ENCODE measurements at regions of chr7 and their contacts with region 1.

Region 1: GRCh38 chr7:64307254-64308015 is 6.3 kb upstream of the ZNF736 start:
- DNase-seq: peak; percentile 95
- H3K4me3 Mint-ChIP-seq: peak overlapping the region; percentile 89
- H3K27ac Mint-ChIP-seq: peak overlapping the region; percentile 95
- H3K4me1 Mint-ChIP-seq: peaks cover 26% of the 10 kb centered on the region
- H3K27me3 Mint-ChIP-seq: no peaks in the 10 kb centered on the region

Region 2: GRCh38 chr7:63900394-63901203 is 406.8 kb before region 1 on chr7:
- CTCF ChIA-PET with region 1: no interaction called
- intact Hi-C with region 1: loop called (anchors 1 kb)
- DNase-seq: peak; percentile 95
- H3K4me3 Mint-ChIP-seq: peak overlapping the region; percentile 93
- H3K27ac Mint-ChIP-seq: peak overlapping the region; percentile 77
- H3K4me1 Mint-ChIP-seq: peaks cover 8% of the 10 kb centered on the region
- H3K27me3 Mint-ChIP-seq: no peaks in the 10 kb centered on the region

Region 3: GRCh38 chr7:64515330-64515729 is 207.9 kb after region 1 on chr7:
- CTCF ChIA-PET with region 1: interaction called, 5 read pairs
- intact Hi-C with region 1: loop called (anchors 5 kb)
- DNase-seq: no peak
- H3K4me3 Mint-ChIP-seq: no peak overlapping the region
- H3K27ac Mint-ChIP-seq: no peak overlapping the region
- H3K4me1 Mint-ChIP-seq: no peaks in the 10 kb centered on the region
- H3K27me3 Mint-ChIP-seq: no peaks in the 10 kb centered on the region